ENCODE measurements at regions of chr4 and their contacts with region 1.

Region 1: GRCh38 chr4:112604589-112604988 is 32.1 kb downstream of the ZGRF1 start:
- DNase-seq: peak in 1 of 2 experiments; percentile 31
- H3K4me3 ChIP-seq: no peak overlapping the region
- H3K27ac ChIP-seq: no peak overlapping the region
- H3K4me1 ChIP-seq: no peaks in the 10 kb centered on the region
- H3K27me3 ChIP-seq: no peaks in the 10 kb centered on the region
- CTCF ChIP-seq: peak; percentile 79

Region 2: GRCh38 chr4:112060212-112060611 is 544.4 kb before region 1 on chr4:
- CTCF ChIA-PET with region 1: no interaction called
- POLR2A ChIA-PET with region 1: no interaction called
- intact Hi-C with region 1: loop called (anchors 1 kb)
- DNase-seq: peak in 1 of 2 experiments; percentile 5
- H3K4me3 ChIP-seq: no peak overlapping the region
- H3K27ac ChIP-seq: no peak overlapping the region
- H3K4me1 ChIP-seq: no peaks in the 10 kb centered on the region
- H3K27me3 ChIP-seq: no peaks in the 10 kb centered on the region
- CTCF ChIP-seq: peak; percentile 79

Region 3: DNA sequence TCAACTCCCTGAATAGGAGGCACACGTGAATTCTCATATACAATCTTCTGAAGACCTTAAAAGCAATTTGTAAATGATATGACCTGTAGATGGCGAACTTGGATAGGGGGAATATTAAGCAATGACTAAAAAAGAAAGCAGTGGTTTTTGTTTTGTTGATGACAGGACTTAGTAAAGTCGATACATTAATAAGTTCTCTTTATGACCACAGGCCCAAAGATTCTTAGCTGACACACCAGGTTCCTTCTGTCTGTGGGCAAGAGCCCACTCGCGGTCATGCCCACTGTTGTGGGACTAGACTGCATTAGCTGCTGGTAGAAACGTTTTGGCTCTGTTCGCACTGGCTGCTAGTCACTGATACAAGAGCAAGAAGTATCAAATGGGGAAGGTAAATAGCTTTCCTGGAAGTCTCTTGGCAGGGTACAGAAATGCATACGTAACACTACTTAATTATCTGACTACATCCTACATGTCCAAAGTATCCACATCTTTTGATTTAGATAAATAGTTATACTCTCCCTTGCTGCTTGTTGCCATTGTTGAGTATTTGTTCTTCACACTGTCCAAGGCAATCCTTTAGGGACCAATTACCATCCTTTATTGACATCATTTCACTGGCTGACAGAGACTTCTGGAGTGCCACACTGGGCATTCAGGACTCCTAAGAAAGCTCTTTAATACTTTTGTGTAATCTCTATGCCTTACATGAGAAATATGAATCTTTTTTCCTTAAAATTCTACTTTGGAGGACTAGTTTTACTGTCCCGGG is 276.4 kb before region 1 on chr4:
- CTCF ChIA-PET with region 1: interaction called, 6 read pairs
- POLR2A ChIA-PET with region 1: no interaction called
- intact Hi-C with region 1: loop called (anchors 1 kb)
- DNase-seq: peak in 1 of 2 experiments; percentile 39
- H3K4me3 ChIP-seq: no peak overlapping the region
- H3K27ac ChIP-seq: no peak overlapping the region
- H3K4me1 ChIP-seq: no peaks in the 10 kb centered on the region
- H3K27me3 ChIP-seq: no peaks in the 10 kb centered on the region
- CTCF ChIP-seq: peak; percentile 71